Caco-2 (cell line): ENCODE measurements at regions of chr11 and their contacts with region 1.

Region 1: GRCh38 chr11:110376711-110377324 is 52.9 kb upstream of the FDX1 start:
- DNase-seq: peak; percentile 88 to 95
- H3K4me3 ChIP-seq: 0 out of 2 replicates have a peak overlapping the region, but pooled peaks have one; percentile 4
- H3K4me3 Mint-ChIP-seq: peak overlapping the region; percentile 61
- H3K27ac Mint-ChIP-seq: peak overlapping the region; percentile 34
- H3K4me1 ChIP-seq: peaks cover 45% of the 10 kb centered on the region
- H3K4me1 Mint-ChIP-seq: peaks cover 30% of the 10 kb centered on the region
- H3K27me3 ChIP-seq: no peaks in the 10 kb centered on the region
- H3K27me3 Mint-ChIP-seq: no peaks in the 10 kb centered on the region
- CTCF ChIP-seq: peak; percentile 93

Region 2: DNA sequence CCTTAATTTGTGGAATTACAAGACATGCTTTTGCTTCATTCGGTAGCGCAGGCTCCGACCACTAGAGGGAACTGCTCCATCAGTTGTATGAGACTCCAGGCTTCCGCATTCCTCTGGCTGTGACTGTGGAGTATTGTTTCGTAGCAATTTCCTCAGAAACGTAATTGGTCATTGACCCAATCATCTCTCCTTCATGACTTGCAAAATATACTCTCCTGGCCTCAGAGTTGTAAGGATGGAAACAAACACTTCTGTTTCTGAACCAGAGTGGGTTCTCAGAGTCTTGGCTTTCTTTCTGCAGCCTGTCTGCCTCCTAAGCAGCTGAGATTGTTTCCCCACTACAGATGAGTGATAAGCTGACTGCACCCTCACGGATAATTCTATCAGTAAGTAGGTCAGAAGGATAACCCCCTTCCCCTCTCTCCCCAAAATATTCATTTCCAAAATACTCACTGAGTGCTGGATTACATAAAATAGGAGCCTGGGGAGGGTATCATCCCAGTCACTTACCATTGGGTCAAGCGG is 430.4 kb before region 1 on chr11:
- CTCF ChIA-PET with region 1: interaction called, 3 read pairs
- POLR2A ChIA-PET with region 1: no interaction called
- intact Hi-C with region 1: loop called (anchors 1 kb)
- DNase-seq: peak; percentile 90 to 92
- H3K4me3 ChIP-seq: peak overlapping the region; percentile 17
- H3K4me3 Mint-ChIP-seq: peak overlapping the region; percentile 72
- H3K27ac Mint-ChIP-seq: peak overlapping the region; percentile 91
- H3K4me1 ChIP-seq: 0 out of 2 replicates have a peak, but pooled peaks cover 5% of the 10 kb centered on the region
- H3K4me1 Mint-ChIP-seq: peaks cover 9% of the 10 kb centered on the region
- H3K27me3 ChIP-seq: no peaks in the 10 kb centered on the region; the same call in 1 of the 2 replicates
- H3K27me3 Mint-ChIP-seq: peaks cover 14% of the 10 kb centered on the region
- CTCF ChIP-seq: peak; percentile 98 to 99

Region 3: DNA sequence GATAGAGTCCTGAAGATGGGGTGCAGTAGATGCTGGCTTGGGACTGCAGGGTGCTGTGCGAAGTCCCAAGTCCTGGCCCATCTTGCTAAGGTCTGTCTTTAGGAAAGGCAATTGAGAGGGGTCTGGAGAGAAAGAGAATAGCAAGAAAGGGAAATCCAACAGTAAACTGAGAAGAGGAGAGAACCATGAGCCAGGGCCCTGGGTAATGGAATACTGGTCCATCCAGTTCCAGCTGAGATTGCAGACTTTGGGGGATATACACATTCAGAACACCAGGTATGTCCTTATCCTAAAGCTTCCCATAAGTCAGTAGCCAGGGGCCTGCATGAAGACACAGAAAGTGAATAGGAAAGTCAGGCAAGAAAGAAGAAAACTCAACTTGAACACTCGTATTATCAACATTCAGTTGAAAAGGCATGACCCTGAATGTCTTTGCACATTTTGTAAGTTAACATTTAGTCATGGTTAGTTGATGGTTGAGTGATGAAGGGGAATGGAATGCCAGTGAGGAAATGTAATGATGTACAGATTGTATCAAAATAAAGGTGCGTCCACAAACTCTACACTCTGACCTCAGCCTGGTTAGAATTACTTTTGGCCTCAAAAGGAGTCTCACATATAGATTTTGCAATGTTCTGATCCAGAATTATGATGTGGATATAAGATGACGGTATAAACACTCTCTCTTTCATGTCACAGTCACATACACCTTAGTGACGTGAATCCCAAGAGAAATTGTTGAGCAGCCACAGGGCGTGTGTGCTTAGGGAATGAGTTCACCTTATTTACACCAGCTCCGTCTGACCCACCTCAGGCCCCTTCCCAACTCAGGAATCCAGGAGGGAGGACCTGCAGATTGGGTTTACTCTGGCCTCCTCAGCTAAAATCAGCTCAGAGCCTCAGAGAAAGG is 180.7 kb before region 1 on chr11:
- CTCF ChIA-PET with region 1: interaction called, 39 read pairs
- POLR2A ChIA-PET with region 1: no interaction called
- intact Hi-C with region 1: loop called (anchors 1 kb)
- DNase-seq: peak; percentile 51 to 70
- H3K4me3 ChIP-seq: no peak overlapping the region
- H3K4me3 Mint-ChIP-seq: no peak overlapping the region
- H3K27ac Mint-ChIP-seq: peak overlapping the region; percentile 23
- H3K4me1 ChIP-seq: peaks cover 21% of the 10 kb centered on the region
- H3K4me1 Mint-ChIP-seq: peaks cover 29% of the 10 kb centered on the region
- H3K27me3 ChIP-seq: no peaks in the 10 kb centered on the region
- H3K27me3 Mint-ChIP-seq: no peaks in the 10 kb centered on the region
- CTCF ChIP-seq: no peak

Region 4: DNA sequence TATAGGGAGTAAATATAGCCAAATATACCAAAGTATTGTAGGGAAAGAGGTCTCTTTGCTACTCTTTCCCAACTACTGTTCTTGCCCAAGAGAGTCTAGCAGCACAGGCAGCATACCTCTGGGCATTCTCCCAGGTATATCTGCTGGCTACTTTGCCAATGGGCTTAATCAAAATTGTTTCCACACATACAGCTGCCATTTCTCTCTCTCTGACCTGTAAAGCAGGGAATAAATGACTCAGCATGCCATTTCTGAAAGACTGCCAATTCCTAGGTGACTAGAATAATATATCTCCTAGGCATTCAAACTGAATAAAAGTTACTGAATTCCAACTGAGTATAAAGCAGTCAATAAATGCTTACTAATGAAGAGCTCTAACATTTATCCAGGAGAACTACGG is 125.0 kb before region 1 on chr11:
- CTCF ChIA-PET with region 1: interaction called, 7 read pairs
- POLR2A ChIA-PET with region 1: no interaction called
- intact Hi-C with region 1: loop called (anchors 2 kb)
- DNase-seq: no peak
- H3K4me3 ChIP-seq: no peak overlapping the region
- H3K4me3 Mint-ChIP-seq: no peak overlapping the region
- H3K27ac Mint-ChIP-seq: no peak overlapping the region
- H3K4me1 ChIP-seq: no peaks in the 10 kb centered on the region
- H3K4me1 Mint-ChIP-seq: no peaks in the 10 kb centered on the region
- H3K27me3 ChIP-seq: no peaks in the 10 kb centered on the region
- H3K27me3 Mint-ChIP-seq: no peaks in the 10 kb centered on the region
- CTCF ChIP-seq: no peak

Region 5: GRCh38 chr11:110296226-110297075 is 80.4 kb before region 1 on chr11 and contains the start of gene RDX:
- CTCF ChIA-PET with region 1: interaction called, 6 read pairs
- POLR2A ChIA-PET with region 1: interaction called, 8 read pairs
- intact Hi-C with region 1: loop called (anchors 1 kb)
- DNase-seq: peak; percentile 88 to 91
- H3K4me3 ChIP-seq: peak within 1 kb of the TSS; percentile 98
- H3K4me3 Mint-ChIP-seq: peak within 1 kb of the TSS; percentile 91
- H3K27ac Mint-ChIP-seq: peak within 1 kb of the TSS; percentile 98
- H3K4me1 ChIP-seq: peaks cover 51% of the 10 kb centered on the region
- H3K4me1 Mint-ChIP-seq: peaks cover 62% of the 10 kb centered on the region
- H3K27me3 ChIP-seq: no peaks in the 10 kb centered on the region
- H3K27me3 Mint-ChIP-seq: no peaks in the 10 kb centered on the region
- CTCF ChIP-seq: peak in 1 of 2 experiments; percentile 24
- total RNA-seq, gene RDX: 250 and 251 TPM in 2 replicates

Region 6: DNA sequence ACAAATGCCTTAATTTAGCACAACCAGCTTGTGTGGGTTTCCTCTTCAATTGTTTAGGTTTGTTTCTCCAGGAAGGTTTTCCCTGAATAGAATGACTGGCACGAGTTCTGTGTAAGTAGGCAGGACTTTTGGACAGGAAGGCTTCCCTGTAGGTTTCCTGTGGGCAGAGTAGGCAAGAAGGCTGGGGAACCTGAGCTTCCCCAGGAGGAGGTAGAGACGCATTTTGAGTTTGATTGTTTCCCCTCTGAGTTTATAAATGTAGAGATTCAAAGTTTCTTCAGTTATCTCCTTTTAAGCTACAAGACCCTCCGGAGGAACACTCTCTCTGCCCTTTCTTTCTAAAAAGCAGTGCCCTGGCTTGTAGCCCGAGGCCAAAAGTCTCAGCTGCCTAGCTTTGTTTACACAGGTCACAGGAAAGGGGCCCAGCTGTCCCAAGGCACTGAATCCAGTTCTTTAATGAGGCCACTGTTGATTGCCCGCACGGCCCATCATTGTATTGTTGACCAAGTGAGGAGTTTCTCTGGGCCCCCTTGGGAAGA is 13.8 kb before region 1 on chr11:
- CTCF ChIA-PET with region 1: interaction called, 7 read pairs
- POLR2A ChIA-PET with region 1: no interaction called
- intact Hi-C with region 1: loop called (anchors 2 kb)
- DNase-seq: peak; percentile 78 to 87
- H3K4me3 ChIP-seq: no peak overlapping the region
- H3K4me3 Mint-ChIP-seq: peak overlapping the region; percentile 61
- H3K27ac Mint-ChIP-seq: peak overlapping the region; percentile 91
- H3K4me1 ChIP-seq: peaks cover 38% of the 10 kb centered on the region
- H3K4me1 Mint-ChIP-seq: peaks cover 58% of the 10 kb centered on the region
- H3K27me3 ChIP-seq: no peaks in the 10 kb centered on the region
- H3K27me3 Mint-ChIP-seq: no peaks in the 10 kb centered on the region
- CTCF ChIP-seq: no peak

Region 7: DNA sequence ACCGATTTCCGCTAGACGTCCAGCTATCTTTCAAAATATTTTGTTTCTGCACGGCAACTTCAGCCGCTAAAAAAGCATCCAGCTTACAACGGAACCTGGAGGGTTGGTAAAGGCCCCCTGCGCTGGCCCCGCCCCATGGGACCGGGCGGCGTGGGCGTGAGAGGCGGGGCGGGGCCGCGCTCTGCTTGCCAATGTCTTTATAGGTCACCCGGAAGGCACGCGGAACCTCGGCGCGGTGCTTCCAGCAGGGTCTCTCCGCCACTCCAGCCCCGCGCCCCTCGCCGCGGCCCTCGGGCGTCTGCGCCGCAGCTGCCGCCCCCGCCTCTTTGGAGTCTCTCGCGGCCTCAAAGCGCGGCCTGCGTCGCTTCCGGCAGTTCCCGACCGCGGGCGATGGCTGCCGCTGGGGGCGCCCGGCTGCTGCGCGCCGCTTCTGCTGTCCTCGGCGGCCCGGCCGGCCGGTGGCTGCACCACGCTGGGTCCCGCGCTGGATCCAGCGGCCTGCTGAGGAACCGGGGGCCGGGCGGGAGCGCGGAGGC is 53.0 kb after region 1 on chr11 and contains the start of gene FDX1:
- CTCF ChIA-PET with region 1: interaction called, 11 read pairs
- POLR2A ChIA-PET with region 1: no interaction called
- intact Hi-C with region 1: loop called (anchors 1 kb)
- DNase-seq: peak; percentile 93 to 96
- H3K4me3 ChIP-seq: peak within 1 kb of the TSS; percentile 61
- H3K4me3 Mint-ChIP-seq: peak within 1 kb of the TSS; percentile 100
- H3K27ac Mint-ChIP-seq: peak within 1 kb of the TSS; percentile 99
- H3K4me1 ChIP-seq: peaks cover 38% of the 10 kb centered on the region
- H3K4me1 Mint-ChIP-seq: peaks cover 51% of the 10 kb centered on the region
- H3K27me3 ChIP-seq: no peaks in the 10 kb centered on the region
- H3K27me3 Mint-ChIP-seq: no peaks in the 10 kb centered on the region
- CTCF ChIP-seq: peak; percentile 42 to 62
- total RNA-seq, gene FDX1: 29.5 and 29.9 TPM in 2 replicates